HEK293 (cell line): ENCODE measurements at regions of chr20 and their contacts with region 1.

Region 1: DNA sequence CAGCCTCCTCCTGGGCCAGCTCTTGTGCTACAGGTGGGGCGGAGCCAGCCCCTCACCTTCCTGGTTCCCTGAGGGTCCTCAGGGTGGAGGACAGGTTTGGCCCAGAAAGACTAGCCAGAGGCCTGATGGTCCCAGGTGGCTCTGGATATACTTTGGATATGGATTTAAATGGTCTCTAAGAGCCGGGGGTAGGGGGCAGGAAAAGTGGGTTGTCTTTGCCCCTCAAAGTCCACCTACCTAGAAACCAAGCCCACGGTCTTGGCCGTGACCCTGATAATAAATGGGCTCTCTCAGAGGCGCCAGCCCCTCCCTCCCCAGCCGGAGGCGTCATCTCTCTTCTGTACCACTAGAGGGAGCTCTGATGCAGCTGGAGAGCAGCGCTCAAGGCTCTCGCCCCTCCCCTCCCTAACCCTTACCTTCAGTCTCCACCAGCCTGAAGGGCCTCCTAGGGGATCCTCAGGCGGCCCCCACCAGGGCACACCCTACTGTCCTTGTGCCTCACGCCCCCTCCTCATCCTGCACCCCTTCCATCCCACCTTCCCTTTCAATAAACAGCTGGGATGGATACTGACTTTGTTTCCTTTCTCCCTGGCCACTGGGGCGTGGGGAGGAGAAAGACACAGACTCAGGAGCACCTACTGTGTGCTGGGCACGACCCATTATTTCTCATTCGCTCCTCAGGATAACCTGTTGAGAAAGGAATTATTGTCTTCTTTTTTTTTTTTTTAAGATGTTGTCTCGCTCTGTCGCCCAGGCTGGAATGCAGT is 7.6 kb downstream of the NRSN2 start:
- H3K4me3 ChIP-seq: no peak overlapping the region
- H3K27ac ChIP-seq: no peak overlapping the region
- H3K4me1 ChIP-seq: no peaks in the 10 kb centered on the region
- CTCF ChIP-seq: peak; percentile 94

Region 2: GRCh38 chr20:152131-152530 is 202.3 kb before region 1 on chr20:
- CTCF ChIA-PET with region 1: no interaction called
- POLR2A ChIA-PET with region 1: no interaction called
- H3K4me3 ChIP-seq: no peak overlapping the region
- H3K27ac ChIP-seq: no peak overlapping the region
- H3K4me1 ChIP-seq: no peaks in the 10 kb centered on the region
- CTCF ChIP-seq: no peak

Region 3: GRCh38 chr20:381581-382290 is 27.3 kb after region 1 on chr20:
- CTCF ChIA-PET with region 1: interaction called, 14 read pairs
- POLR2A ChIA-PET with region 1: interaction called, 3 read pairs
- H3K4me3 ChIP-seq: peak overlapping the region; percentile 60
- H3K27ac ChIP-seq: peak overlapping the region; percentile 87; the same call in 1 of the 2 replicates
- H3K4me1 ChIP-seq: peaks cover 9% of the 10 kb centered on the region; the same call in 1 of the 2 replicates
- CTCF ChIP-seq: peak; percentile 43

Region 4: GRCh38 chr20:472889-473292 is 118.4 kb after region 1 on chr20:
- CTCF ChIA-PET with region 1: interaction called, 54 read pairs
- POLR2A ChIA-PET with region 1: no interaction called
- H3K4me3 ChIP-seq: no peak overlapping the region
- H3K27ac ChIP-seq: no peak overlapping the region
- H3K4me1 ChIP-seq: no peaks in the 10 kb centered on the region
- CTCF ChIP-seq: no peak

Region 5: DNA sequence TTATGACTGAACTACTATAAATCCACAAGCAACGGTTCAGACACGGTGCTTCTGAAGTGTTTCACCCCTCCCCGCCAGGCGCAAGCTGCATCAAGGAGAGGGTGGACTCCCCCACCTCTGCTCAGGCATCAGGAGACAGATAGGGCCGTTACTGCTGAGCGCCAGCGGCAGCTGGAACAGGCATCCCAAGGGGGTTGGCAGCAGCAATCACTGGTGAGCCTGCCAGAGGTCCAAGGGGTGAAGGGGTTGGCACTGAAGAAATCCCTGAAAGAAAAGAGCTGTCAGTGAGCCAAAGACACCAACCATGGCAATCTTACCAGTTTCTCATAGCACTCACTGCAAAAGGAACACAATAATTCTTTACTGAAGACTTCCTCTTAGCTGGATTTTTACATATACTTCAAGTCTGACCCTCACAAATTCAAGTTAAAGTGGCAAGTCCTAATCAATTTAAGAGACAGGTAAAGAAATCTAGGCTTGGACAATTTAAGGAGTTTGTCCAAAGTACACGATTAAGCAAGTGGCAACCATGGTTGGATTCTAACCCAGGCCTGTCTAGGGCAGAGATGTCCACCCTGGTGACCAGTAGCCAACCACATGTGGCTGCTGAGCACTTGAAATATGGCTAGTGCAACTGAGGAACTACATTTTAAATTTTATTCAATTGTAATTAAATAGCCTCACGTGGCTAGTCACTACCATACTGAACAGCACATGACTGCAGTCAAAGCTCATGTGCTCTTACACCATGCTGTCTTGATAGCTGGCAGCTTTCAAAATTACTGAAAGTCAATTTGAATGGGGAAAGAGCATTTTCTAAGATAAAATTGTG is 129.5 kb after region 1 on chr20:
- CTCF ChIA-PET with region 1: interaction called, 54 read pairs
- POLR2A ChIA-PET with region 1: interaction called, 3 read pairs
- H3K4me3 ChIP-seq: no peak overlapping the region
- H3K27ac ChIP-seq: no peak overlapping the region
- H3K4me1 ChIP-seq: no peaks in the 10 kb centered on the region
- CTCF ChIP-seq: no peak

Region 6: DNA sequence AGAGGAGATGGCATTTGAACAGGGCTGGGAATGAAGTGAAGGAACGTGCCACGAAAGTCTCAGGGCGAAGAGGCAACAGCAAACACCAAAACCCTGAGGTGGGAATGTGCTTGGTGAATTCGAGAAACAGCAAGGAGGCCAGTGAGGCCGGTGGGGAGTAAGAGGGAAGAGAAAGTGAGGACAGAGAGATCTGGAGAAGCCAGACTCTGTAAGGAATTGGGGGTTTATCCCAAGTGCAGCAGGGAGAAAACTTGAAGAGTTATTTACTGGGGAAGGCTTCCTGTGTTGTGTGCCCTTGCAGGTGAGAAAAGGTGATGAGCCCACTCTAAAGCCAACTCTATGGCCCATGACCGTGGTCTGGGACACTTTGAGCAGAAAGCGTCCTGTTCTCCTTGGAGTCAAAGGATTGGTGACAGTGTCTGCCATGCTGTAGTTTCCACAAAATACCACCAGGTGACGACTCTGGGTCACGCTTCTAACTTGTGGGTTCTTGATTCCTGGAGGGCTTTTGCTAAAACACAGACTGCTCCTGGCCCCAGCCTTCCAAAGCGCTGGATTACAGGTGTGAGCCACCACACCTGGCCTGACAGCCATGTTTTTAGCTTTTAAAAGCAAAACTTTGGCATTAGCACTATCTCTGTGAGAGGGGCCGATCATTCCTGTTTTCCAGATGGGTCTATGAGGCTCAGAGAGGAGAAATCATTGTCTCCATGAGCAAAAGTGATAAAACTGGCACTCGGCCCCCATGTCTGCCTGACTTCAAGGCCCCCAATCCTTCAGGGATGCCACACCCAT is 207.2 kb after region 1 on chr20:
- CTCF ChIA-PET with region 1: interaction called, 12 read pairs
- POLR2A ChIA-PET with region 1: no interaction called
- H3K4me3 ChIP-seq: no peak overlapping the region
- H3K27ac ChIP-seq: no peak overlapping the region
- H3K4me1 ChIP-seq: no peaks in the 10 kb centered on the region
- CTCF ChIP-seq: peak; percentile 83